ENCODE measurements at regions of chr7 and their contacts with region 1.

Region 1: GRCh38 chr7:130896898-130897514 is 163.0 kb upstream of the KLF14 start:
- DNase-seq: peak; percentile 82
- ATAC-seq: peak; percentile 73
- H3K4me3 Mint-ChIP-seq: no peak overlapping the region
- H3K27ac Mint-ChIP-seq: peak overlapping the region; percentile 74
- H3K4me1 Mint-ChIP-seq: peaks cover 82% of the 10 kb centered on the region
- H3K27me3 Mint-ChIP-seq: no peaks in the 10 kb centered on the region

Region 2: GRCh38 chr7:130921391-130922180 is 24.6 kb after region 1 on chr7:
- CTCF ChIA-PET with region 1: interaction called, 16 read pairs
- DNase-seq: no peak
- ATAC-seq: no peak
- H3K4me3 Mint-ChIP-seq: no peak overlapping the region
- H3K27ac Mint-ChIP-seq: peak overlapping the region; percentile 71
- H3K4me1 Mint-ChIP-seq: peaks cover 86% of the 10 kb centered on the region
- H3K27me3 Mint-ChIP-seq: no peaks in the 10 kb centered on the region

Region 3: DNA sequence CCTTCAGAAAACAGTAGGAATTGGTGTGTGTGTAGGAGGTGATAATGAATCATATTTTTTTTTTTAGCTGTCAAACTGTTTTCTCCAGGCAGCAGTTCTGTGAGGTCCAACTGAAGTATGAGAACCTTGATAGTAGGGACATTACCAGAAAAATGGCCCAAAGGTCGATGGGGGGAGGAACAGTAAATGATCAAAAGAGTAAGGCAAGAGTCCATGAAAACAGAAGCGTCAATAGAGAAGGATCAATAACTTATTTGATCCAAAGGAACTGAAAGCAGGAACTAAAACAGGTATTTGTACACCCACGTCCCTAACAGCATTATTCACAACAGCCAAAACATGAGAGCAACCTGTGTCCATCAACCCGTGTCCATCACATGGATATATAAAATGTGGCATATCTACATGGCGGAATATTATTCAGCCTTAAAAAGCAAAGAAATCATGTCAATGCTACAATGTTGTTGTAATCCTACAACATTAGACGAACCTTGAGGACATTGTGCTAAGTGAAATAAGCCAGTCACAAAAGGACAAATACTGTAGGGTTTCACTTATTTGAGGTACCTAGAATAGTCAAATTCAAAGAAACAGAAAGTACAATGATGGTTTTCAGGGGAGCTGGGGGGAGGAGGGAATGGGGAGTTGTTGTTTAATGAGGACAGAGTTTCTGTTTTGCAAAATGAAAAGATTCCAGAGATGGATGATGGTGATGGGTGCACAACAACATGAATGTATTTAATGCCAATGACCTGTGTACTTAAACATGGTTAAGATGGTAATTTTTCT is 51.0 kb after region 1 on chr7:
- CTCF ChIA-PET with region 1: interaction called, 18 read pairs
- DNase-seq: no peak
- ATAC-seq: peak; percentile 24
- H3K4me3 Mint-ChIP-seq: peak overlapping the region; percentile 64
- H3K27ac Mint-ChIP-seq: peak overlapping the region; percentile 84
- H3K4me1 Mint-ChIP-seq: peaks cover 61% of the 10 kb centered on the region
- H3K27me3 Mint-ChIP-seq: no peaks in the 10 kb centered on the region

Region 4: GRCh38 chr7:130982160-130982638 is 85.2 kb after region 1 on chr7:
- CTCF ChIA-PET with region 1: interaction called, 23 read pairs
- DNase-seq: no peak
- ATAC-seq: peak; percentile 78
- H3K4me3 Mint-ChIP-seq: no peak overlapping the region
- H3K27ac Mint-ChIP-seq: no peak overlapping the region
- H3K4me1 Mint-ChIP-seq: peaks cover 46% of the 10 kb centered on the region
- H3K27me3 Mint-ChIP-seq: no peaks in the 10 kb centered on the region

Region 5: GRCh38 chr7:131007394-131008330 is 110.7 kb after region 1 on chr7:
- CTCF ChIA-PET with region 1: interaction called, 53 read pairs
- DNase-seq: peak; percentile 81
- ATAC-seq: peak; percentile 58
- H3K4me3 Mint-ChIP-seq: peak overlapping the region; percentile 49
- H3K27ac Mint-ChIP-seq: peak overlapping the region; percentile 93
- H3K4me1 Mint-ChIP-seq: peaks cover 80% of the 10 kb centered on the region
- H3K27me3 Mint-ChIP-seq: no peaks in the 10 kb centered on the region

Region 6: DNA sequence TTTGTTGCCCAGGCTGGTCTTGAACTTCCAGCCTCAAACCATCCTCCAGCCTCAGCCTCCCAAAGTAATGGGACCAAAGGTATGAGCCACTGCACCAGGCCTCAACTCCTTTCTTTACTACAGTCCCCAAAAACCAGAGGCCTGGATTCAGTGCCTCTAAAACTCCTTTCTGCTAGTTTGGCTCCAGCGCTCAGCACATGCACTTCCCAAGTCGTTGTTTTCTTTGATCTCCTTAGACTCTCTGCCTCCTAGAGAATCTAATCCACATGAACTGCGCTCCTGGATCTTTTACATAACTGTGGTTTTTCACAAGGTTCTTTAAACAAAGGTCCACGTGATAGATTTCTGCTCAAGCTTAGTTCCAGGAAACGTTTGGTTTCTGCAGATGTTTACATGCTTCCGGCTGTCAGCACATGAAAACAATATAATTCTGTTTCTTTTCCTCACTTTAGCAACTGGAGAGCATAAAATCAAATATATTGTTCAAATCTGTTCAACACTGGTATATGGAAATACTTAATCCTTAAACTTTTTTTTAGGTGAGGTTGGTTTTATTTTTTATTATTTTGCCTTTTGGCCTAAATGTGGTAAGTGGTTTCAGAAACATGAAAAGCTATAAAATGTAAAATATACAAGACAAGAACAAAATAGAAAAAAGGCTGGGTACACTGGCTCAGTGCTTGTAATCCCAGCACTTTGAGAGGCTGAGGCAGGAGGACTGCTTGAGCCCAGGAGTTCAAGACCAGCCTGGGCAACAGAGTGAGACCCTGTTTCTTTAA is 160.2 kb after region 1 on chr7:
- CTCF ChIA-PET with region 1: interaction called, 10 read pairs
- DNase-seq: peak; percentile 51
- ATAC-seq: peak; percentile 74
- H3K4me3 Mint-ChIP-seq: peak overlapping the region; percentile 53
- H3K27ac Mint-ChIP-seq: peak overlapping the region; percentile 80
- H3K4me1 Mint-ChIP-seq: peaks cover 43% of the 10 kb centered on the region
- H3K27me3 Mint-ChIP-seq: no peaks in the 10 kb centered on the region

Measured in activated CD8-positive, alpha-beta memory T cell treated with anti-CD3 and anti-CD28 coated beads, Interleukin-2, amount 10 ng/mL, durations not matched to agents 7 days and 5 days (primary cell).